Cardiac septum (tissue), 1 donor: ENCODE measurements at regions of chr12 and their contacts with region 1.

Region 1: DNA sequence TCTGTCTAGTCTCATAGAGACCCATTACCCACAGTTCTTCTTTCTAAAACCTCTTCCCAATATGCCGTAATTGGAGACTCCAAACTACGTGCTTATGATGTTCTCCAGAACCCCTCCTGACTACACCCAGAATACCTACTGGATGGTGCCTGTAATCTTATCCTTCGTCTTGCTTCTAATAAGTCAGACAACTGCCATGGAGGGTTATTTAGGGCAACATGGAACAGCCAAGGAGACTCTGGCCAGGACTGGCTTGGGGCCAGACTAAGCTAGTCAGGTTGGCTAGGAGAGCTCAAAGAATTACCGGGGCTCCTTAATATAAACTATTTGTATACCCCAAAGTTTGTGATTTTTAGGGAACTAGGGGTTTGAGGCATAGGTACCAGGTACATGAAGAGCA is 6.8 kb downstream of the PFKM start:
- DNase-seq: no peak

Region 2: DNA sequence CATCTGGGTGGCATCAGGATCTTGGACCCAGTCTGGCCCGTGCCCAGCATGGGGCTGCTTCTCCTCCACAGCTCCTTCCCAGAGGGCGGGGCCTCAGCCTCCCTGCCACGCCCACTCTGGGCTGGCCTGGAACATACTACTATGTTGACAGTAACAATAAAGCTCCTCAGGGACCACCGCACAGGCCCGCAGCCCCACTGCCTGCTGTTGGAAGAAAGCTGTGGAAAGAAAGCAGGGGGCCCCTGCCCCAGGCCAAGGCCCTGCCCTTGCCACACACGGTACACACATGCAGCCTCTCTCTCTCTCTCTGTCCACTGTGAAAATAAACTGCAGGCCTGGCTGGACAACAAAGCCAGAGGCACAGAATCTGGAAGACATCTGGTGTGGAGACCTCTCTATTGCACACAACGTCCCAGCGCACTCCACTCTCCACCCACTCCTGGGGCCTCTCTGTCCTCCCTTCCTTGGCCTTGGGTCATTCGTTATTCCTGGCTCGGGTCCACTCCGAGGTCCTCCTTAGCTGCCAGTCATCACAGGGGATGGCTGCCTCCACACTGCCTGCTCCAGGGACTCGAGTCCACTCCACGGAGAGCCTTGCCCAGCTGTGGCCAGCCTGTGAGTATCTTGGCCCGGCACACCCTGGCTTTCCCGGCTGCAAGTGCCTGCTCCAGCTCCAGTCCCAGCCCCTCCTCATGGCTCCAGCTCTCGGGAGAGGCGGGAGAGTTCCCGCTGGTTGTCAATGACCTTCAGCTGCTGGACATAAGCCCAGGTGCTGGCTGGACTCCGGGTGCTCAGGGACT is 388.9 kb before region 1 on chr12:
- intact Hi-C with region 1: no loop called
- DNase-seq: peak; percentile 90

Region 3: DNA sequence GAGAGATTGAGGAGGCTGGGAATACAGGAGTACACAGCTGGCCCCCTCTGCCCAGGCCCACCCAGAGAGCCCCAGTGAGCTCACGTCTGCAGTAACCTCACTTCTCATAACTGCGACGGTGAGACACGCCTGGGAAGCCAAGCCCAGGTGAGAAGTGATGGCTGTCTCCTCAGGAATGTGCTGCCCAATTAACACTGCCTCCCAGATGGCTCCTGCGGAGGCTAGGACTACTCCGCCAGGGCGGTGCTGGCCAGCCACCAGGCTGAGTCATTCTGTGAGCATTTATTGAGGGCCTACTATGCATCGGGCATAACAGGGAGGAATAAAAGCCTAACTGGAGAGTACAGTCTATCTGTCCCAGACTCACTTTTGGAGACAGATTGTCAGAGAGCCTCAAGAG is 171.9 kb before region 1 on chr12:
- intact Hi-C with region 1: no loop called
- DNase-seq: no peak

Region 4: GRCh38 chr12:48105862-48106680 is 19.9 kb before region 1 on chr12 and contains the start of gene SENP1:
- intact Hi-C with region 1: loop called (anchors 2 kb)
- DNase-seq: peak; percentile 93
- total RNA-seq, gene SENP1: 10.1 TPM

Region 5: DNA sequence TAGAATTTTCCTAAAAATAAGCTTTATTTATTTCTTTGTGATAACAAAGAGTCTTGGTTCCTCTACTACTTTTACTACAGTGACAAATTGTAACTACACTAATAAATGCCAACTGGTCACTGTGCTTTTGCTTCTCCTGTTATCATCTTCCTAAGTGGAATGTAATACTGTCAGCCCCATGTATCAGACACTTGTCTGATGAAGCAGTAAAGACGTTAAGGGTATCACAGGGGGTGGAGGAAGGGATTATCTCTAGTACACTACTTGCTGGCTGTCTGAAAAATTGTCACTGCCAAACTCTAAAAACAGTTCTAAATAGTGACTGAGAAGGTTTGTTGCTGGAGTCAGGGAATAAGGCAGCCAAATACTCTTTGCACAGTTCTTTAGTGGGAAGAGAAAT is 20.0 kb after region 1 on chr12:
- intact Hi-C with region 1: loop called (anchors 2 kb)
- DNase-seq: no peak